ENCODE measurements at regions of chr11 and their contacts with region 1.

Region 1: GRCh38 chr11:134119094-134119493 is 50.2 kb downstream of the JAM3 start:
- DNase-seq: no peak

Region 2: DNA sequence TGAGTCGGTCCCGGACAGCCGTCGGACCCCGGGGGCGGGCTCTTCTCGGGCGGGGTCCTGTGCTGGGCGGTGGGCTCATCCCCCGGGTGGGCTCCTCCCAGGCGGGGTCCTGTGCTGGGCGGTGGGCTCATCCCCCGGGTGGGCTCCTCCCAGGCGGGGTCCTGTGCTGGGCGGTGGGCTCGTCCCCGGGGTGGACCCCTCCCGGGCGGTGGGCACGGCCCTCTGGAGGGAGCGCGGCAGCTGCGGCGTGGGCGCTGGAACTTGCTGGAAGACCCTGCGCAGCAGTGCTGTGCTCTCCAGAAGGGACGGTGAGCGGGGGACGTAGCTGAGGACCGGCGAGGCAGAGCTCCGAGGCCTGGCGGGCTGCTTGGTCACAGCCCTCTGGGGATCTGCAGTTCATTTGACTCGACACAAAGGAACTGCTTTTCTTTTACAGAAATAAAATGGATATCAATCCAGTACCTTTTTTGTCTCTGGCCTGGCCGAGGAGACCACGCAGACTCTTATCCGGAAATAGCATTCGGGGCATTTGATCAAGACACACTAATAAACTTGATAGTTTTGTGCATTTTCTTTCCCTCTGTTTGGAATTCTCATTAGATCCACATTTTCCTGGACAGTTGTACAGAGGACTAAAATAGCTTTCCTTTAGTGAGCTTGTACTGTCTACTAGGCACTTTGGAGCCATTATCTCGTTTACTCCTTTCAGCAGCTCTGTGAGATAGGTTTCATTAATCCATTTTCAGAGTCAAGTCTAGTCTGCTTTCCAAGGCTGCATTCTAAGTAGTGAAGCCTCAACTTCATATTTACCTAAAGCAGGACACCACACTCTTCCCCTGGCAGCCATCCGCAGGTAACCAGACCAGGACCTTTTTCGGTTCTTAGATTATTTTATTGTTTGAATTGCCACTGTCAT is 49.4 kb before region 1 on chr11:
- intact Hi-C with region 1: loop called in 1 of 2 experiments (anchors 5 kb)
- DNase-seq: no peak

Region 3: GRCh38 chr11:134164490-134165370 is 45.6 kb after region 1 on chr11:
- intact Hi-C with region 1: no loop called
- DNase-seq: no peak

Measured in posterior vena cava (tissue), 2 donors.